HEK293 (cell line): ENCODE measurements at regions of chr2 and their contacts with region 1.

Region 1: GRCh38 chr2:185738679-185739472 is at the start of gene FSIP2:
- H3K4me3 ChIP-seq: peak within 1 kb of the TSS; percentile 46
- H3K27ac ChIP-seq: no peak within 1 kb of the TSS
- H3K4me1 ChIP-seq: no peaks in the 10 kb centered on the region
- CTCF ChIP-seq: peak; percentile 93

Region 2: DNA sequence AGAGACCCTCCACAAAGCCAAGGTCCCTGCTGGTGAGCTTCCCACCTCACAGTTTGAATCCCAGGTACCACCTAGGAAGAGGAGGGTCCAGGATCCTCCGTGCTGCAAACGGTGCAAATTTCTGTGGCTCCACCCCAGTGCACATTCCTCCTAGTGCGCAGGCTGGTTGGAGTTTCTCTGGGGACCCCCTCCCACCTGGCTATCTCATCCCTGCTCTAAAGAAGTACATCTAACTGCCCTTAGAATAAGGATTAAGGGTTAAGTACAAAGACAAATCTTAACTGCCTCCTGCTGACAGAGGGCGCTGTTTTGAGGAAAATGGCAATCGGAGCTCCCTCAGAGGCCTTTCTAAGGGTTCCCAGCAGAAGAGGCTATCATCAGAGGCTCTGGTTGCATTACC is 109.9 kb before region 1 on chr2:
- CTCF ChIA-PET with region 1: interaction called, 11 read pairs
- POLR2A ChIA-PET with region 1: no interaction called
- H3K4me3 ChIP-seq: no peak overlapping the region
- H3K27ac ChIP-seq: no peak overlapping the region
- H3K4me1 ChIP-seq: no peaks in the 10 kb centered on the region
- CTCF ChIP-seq: no peak

Region 3: GRCh38 chr2:185695711-185696235 is 43.1 kb before region 1 on chr2:
- CTCF ChIA-PET with region 1: no interaction called
- POLR2A ChIA-PET with region 1: no interaction called
- H3K4me3 ChIP-seq: no peak overlapping the region
- H3K27ac ChIP-seq: no peak overlapping the region
- H3K4me1 ChIP-seq: no peaks in the 10 kb centered on the region
- CTCF ChIP-seq: no peak

Region 4: DNA sequence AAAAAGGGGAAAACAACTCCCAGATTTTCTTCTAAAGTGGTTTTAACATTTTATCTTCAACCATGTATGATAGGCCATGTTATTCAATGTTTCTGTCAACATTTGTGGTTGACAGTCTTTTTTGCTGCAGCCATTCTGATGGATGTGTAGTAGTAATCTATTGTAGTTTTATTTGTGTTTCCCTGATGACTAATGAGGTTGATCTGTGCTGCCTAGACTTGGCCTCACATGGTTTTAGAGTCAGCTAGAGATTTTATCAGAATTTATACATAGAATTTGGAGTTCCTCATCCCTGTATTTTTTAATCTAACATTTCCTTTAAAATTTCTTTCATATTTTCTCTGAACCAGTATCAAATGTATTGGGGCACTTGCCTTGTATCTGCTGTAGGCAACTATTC is 20.2 kb before region 1 on chr2:
- CTCF ChIA-PET with region 1: interaction called, 10 read pairs
- POLR2A ChIA-PET with region 1: no interaction called
- H3K4me3 ChIP-seq: no peak overlapping the region
- H3K27ac ChIP-seq: no peak overlapping the region
- H3K4me1 ChIP-seq: no peaks in the 10 kb centered on the region
- CTCF ChIP-seq: no peak